Head of caudate nucleus (tissue), 42 donors: ENCODE measurements at regions of chr2 and their contacts with region 1.

Region 1: GRCh38 chr2:141957827-141958450 is 172.9 kb downstream of the LRP1B start:
- DNase-seq: peak in 13 of 42 donors; percentile 1 to 62 (median 26)

Region 2: GRCh38 chr2:141741652-141742051 is 216.3 kb before region 1 on chr2:
- intact Hi-C with region 1: no loop called
- DNase-seq: no peak

Region 3: GRCh38 chr2:141817890-141818289 is 140.0 kb before region 1 on chr2:
- intact Hi-C with region 1: no loop called
- DNase-seq: no peak

Region 4: DNA sequence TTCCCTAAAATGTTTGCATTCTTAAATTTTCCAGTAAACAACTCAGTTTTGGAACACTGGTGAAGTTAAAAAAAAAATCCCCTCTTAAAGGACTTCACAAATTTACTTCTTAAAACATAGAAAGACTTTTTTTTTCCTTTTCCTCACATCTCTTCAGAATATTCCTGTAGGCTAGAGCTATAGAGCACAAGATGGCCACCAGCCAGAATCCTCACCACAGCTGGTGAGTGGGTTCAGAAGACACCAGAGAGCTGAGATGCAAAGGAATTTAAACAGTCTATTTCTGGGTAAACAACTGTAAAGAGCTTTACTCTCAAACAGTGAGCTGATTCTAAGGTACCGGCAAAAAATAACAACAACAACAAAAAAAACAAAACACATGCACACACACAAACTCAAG is 79.9 kb before region 1 on chr2:
- intact Hi-C with region 1: no loop called
- DNase-seq: no peak

Region 5: GRCh38 chr2:142130111-142131009 is 172.4 kb after region 1 on chr2:
- intact Hi-C with region 1: loop called (anchors 2 kb)
- DNase-seq: peak; percentile 38 to 88 (median 73)

Region 6: DNA sequence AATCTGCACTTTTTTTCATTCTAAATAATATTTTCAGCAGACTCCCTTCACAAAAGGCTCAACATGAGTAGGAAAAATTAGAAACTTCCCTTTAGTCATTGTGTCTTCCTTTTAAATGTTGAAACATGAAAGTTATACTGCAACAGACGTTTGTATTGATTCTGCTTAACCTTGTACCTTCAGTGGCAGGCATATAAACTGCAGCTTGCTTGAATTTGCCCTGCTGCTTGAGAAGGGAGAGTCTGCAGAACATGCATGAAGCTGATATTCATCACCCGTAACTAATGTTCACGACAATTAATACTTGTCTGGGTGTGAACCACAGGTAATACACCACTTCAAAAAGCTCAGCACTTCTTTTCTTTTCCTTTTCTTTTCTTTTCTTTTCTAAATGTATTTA is 467.6 kb after region 1 on chr2:
- intact Hi-C with region 1: no loop called
- DNase-seq: no peak